Calu3 (cell line): ENCODE measurements at regions of chr11 and their contacts with region 1.

Region 1: GRCh38 chr11:128522055-128522942 is 65.1 kb downstream of the ETS1 start:
- DNase-seq: peak; percentile 88
- H3K4me3 Mint-ChIP-seq: peak overlapping the region; percentile 76
- H3K27ac Mint-ChIP-seq: peak overlapping the region; percentile 65
- H3K4me1 Mint-ChIP-seq: peaks cover 48% of the 10 kb centered on the region
- H3K27me3 Mint-ChIP-seq: no peaks in the 10 kb centered on the region
- CTCF ChIP-seq: no peak

Region 2: GRCh38 chr11:128472128-128473089 is 49.9 kb before region 1 on chr11:
- CTCF ChIA-PET with region 1: no interaction called
- intact Hi-C with region 1: loop called (anchors 5 kb)
- DNase-seq: no peak
- H3K4me3 Mint-ChIP-seq: no peak overlapping the region
- H3K27ac Mint-ChIP-seq: no peak overlapping the region
- H3K4me1 Mint-ChIP-seq: peaks cover 59% of the 10 kb centered on the region
- H3K27me3 Mint-ChIP-seq: no peaks in the 10 kb centered on the region
- CTCF ChIP-seq: no peak

Region 3: DNA sequence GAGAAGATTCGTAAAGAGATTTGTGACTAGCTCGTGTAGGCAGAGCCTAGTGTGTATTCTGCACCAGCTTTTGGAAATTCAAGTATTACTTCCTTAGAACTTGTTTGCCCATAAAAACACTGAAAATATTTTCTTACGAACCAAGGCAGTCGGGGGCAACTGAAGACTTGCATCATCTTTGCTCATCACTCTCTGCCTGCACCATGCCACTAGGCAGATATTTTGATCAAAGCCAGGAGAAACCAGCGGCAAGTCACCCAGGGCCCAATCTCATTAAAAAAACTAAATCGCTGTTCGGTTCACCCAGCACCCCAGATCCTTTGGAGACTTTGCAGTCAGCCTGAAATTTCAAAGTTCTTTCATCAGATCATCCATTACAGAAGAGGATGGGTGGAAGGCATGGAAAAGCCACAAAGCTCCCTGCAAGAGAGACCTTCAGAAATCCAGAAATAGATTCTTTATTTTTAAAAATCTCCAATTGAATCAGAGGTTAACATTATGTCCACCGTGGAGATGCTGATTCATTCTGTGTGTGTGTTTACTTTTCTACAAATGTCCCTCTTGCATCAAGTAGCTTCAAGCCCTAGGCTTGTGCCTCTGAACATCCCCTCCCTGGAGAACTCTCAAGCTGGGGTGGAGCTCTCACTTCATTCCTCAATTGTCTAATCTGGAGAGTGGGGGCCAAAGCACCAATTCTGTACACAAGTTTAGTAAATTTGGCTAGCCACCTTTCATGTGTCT is 13.4 kb before region 1 on chr11:
- CTCF ChIA-PET with region 1: interaction called, 12 read pairs
- intact Hi-C with region 1: no loop called
- DNase-seq: no peak
- H3K4me3 Mint-ChIP-seq: no peak overlapping the region
- H3K27ac Mint-ChIP-seq: no peak overlapping the region
- H3K4me1 Mint-ChIP-seq: peaks cover 44% of the 10 kb centered on the region
- H3K27me3 Mint-ChIP-seq: no peaks in the 10 kb centered on the region
- CTCF ChIP-seq: no peak

Region 4: DNA sequence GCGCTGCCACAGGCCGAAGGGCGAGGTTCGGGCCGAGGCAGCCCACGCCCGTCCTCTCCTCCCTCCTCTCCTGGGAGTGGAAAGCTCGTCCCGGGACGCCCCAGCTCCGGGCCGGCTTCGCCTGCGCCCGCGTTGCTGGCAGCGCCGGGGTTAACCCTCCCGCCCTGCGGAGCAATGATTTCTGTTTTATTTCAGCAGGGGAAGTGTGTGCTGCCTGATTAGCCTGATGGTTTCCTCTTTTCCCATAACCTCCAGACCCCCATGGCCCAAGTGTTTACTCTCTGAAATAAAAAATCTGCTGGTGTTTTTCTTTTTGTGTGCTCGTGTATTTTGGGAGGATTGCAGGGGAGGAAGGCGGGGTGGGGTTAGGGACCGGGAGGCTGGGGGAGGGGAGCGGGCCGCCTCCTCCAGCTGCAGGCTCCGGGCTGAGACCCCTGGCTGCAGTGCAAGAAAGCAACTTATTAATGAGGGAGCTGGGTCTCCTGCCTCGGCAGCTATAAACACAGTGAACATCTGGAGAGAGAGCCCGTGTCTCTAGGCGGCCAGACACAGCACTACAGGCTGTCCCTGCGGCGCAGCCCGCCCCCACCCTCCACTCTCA is 26.5 kb after region 1 on chr11:
- CTCF ChIA-PET with region 1: no interaction called
- intact Hi-C with region 1: no loop called
- DNase-seq: no peak
- H3K4me3 Mint-ChIP-seq: peak overlapping the region; percentile 43
- H3K27ac Mint-ChIP-seq: no peak overlapping the region
- H3K4me1 Mint-ChIP-seq: peaks cover 14% of the 10 kb centered on the region
- H3K27me3 Mint-ChIP-seq: peaks cover 13% of the 10 kb centered on the region
- CTCF ChIP-seq: no peak

Region 5: DNA sequence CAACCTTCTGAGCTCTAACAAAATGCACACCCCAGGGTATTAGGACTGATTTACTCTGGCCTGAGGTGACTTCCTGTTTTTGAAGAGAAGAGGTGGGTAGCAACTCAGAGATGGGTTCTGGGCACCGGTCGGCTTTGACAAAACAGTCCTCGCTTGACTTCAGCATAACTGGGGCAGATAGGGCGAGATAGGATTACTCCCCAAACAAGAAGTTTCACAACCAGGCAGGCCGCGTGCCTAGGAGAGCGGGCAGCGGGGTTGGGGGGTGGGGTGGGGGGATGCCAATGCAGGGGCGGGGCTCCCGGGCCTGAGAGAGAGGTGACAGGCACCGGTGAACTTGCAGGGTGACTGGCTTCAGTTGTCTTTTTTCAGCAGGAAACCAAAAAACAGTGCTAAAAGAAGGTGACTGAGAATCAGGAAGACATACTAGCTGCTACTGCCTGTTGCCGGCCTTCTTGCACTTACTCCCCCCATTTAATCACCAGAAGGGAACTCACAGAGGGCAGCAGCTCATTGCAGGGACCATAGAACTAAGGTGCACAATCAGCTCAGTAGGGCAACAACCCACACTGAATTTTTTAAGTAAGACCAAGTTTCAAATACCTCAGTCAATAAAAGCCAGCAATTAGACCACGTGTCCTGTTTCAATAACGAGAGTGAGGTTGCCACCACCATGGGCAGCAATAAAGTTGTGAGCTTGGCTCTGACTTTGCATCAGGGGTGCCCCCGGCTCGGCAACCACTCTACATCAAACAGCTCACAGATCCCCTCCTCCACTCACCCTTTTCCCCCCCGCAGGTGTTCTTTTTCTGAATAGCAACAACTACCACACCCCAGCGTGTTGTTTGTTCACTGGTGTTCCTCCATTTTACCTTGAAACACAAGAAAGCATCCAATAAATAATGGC is 102.2 kb after region 1 on chr11:
- CTCF ChIA-PET with region 1: no interaction called
- intact Hi-C with region 1: loop called (anchors 10 kb)
- DNase-seq: no peak
- H3K4me3 Mint-ChIP-seq: no peak overlapping the region
- H3K27ac Mint-ChIP-seq: no peak overlapping the region
- H3K4me1 Mint-ChIP-seq: no peaks in the 10 kb centered on the region
- H3K27me3 Mint-ChIP-seq: peaks cover 7% of the 10 kb centered on the region
- CTCF ChIP-seq: no peak